ENCODE measurements at regions of chr1 and their contacts with region 1.

Region 1: DNA sequence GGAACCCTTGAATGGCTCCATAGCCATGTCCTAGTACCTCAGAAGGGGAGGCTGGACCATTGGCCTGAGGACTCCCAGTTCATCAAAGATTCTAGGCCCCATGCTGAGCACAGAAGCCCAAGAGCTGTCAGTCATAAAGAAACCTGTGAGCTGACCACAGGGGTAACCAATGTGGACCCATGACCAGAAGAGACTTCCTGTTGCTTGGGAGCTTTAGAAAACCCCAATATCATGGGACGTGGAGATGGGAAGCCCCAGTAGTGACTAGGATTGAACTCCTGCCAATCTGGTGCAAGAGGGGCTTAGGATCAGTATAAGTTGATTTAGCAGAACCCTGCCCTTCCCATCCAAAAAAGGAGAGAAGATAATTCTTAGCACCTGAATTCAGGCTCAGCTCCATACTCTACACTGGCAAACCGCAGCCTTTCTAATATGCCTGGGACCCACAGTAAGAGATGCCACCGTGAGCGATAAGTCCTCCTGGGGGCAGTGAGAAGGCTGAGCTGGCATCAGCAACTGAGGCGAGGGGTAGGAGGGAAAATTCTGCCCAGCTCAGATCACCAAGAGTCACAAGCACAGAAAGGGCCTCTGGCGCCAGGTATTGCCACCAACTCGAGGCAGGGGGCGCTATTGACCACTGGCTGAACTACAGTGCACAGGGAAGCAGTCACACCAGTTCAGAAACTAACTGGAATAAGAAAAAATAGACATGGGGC is 108.9 kb downstream of the CAPN8 start:
- DNase-seq: peak; percentile 31 to 93
- H3K4me3 ChIP-seq: no peak overlapping the region
- H3K27ac ChIP-seq: no peak overlapping the region
- H3K4me1 ChIP-seq: no peaks in the 10 kb centered on the region
- H3K27me3 ChIP-seq: no peaks in the 10 kb centered on the region
- CTCF ChIP-seq: peak; percentile 95 to 96 (median 96)
- EP300 ChIP-seq: no peak
- POLR2A ChIP-seq: no peak
- RAD21 ChIP-seq: peak; percentile 94

Region 2: DNA sequence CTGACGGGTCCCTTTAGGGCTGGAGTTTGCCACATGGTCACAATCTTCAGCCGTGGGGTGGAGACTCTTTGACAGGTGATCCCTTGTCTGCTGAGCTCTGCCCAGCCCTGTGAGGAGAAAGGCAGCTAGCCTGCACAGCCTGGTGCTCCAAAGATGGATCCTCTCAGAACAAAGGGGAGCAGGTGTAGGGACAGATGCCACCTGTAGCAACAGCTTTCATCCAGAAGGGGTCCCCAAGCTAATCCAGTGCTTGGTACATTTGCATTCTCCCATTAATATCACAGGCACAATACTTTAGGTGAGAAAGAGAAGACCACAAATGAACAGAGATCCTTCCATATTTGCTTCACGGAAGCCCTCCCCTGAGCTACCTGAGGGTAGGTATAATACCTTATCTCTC is 70.2 kb before region 1 on chr1:
- CTCF ChIA-PET with region 1: interaction called, 12 read pairs
- POLR2A ChIA-PET with region 1: no interaction called
- DNase-seq: no peak
- H3K4me3 ChIP-seq: no peak overlapping the region
- H3K27ac ChIP-seq: no peak overlapping the region
- H3K4me1 ChIP-seq: peaks cover 0 to 7% (median 1%) of the 10 kb centered on the region in 4 experiments; a peak in 3 of 7 replicates
- H3K27me3 ChIP-seq: peaks cover 0 to 2% (median 0%) of the 10 kb centered on the region in 4 experiments; a peak in 1 of 7 replicates
- CTCF ChIP-seq: peak in 1 of 3 experiments; percentile 42; a peak in 2 of 4 replicates
- EP300 ChIP-seq: no peak
- POLR2A ChIP-seq: no peak
- RAD21 ChIP-seq: no peak; a peak in 1 of 4 replicates

Region 3: DNA sequence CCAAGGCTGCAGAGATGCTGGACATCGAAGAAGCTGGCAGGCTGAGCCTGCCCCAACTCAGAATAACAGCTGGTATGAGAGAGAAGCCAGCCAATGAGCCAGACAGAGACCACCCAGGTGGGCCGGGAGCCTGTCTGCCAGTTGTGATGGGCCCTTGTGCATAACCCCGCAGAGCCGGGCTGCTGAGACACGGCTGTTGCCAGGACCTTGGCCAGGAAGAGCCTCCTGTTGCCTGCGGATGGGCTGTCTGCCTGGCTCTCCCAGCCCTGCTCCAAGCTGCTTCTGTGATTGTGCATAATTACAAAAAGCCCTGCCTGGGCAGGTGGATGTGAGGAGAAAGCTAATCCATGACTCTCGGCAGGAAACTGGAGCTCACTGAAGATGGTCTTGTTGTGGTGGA is 17.6 kb before region 1 on chr1:
- CTCF ChIA-PET with region 1: interaction called, 17 read pairs
- POLR2A ChIA-PET with region 1: no interaction called
- DNase-seq: no peak
- H3K4me3 ChIP-seq: no peak overlapping the region
- H3K27ac ChIP-seq: no peak overlapping the region
- H3K4me1 ChIP-seq: peaks cover 0 to 3% (median 0%) of the 10 kb centered on the region in 4 experiments; a peak in 1 of 7 replicates
- H3K27me3 ChIP-seq: no peaks in the 10 kb centered on the region
- CTCF ChIP-seq: no peak
- EP300 ChIP-seq: no peak
- POLR2A ChIP-seq: no peak
- RAD21 ChIP-seq: no peak

Region 4: DNA sequence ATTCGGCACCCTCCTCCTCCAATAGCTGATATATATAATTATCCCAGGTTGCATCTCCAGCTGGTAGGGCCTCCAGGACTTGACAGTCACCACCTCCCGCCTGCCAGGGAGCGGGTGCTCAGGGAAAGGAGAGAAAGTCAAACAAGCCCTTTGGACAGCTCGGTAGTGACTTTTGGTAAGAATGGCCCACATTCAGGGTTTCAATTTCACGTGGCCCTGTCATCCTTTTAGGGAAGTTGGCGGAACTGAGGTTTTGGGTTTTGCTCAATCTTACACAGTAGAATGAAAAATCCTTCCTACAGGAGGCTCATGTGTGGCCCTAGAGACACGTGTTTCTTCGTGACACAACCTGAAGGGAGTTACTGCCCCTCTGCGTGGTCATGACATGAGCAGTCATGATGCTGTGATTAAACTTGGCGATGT is 64.8 kb after region 1 on chr1:
- CTCF ChIA-PET with region 1: interaction called, 52 read pairs
- POLR2A ChIA-PET with region 1: no interaction called
- DNase-seq: no peak
- H3K4me3 ChIP-seq: no peak overlapping the region
- H3K27ac ChIP-seq: no peak overlapping the region
- H3K4me1 ChIP-seq: peaks cover 0 to 6% (median 1%) of the 10 kb centered on the region in 4 experiments; a peak in 3 of 7 replicates
- H3K27me3 ChIP-seq: no peaks in the 10 kb centered on the region
- CTCF ChIP-seq: no peak
- EP300 ChIP-seq: no peak
- POLR2A ChIP-seq: no peak
- RAD21 ChIP-seq: no peak

Region 5: GRCh38 chr1:223639331-223639749 is 82.8 kb after region 1 on chr1:
- CTCF ChIA-PET with region 1: interaction called, 19 read pairs
- POLR2A ChIA-PET with region 1: no interaction called
- DNase-seq: no peak
- H3K4me3 ChIP-seq: no peak overlapping the region
- H3K27ac ChIP-seq: no peak overlapping the region
- H3K4me1 ChIP-seq: no peaks in the 10 kb centered on the region
- H3K27me3 ChIP-seq: 0 out of 7 replicates have a peak, but pooled peaks cover 0 to 2% (median 0%) of the 10 kb centered on the region in 4 experiments
- CTCF ChIP-seq: no peak
- EP300 ChIP-seq: no peak
- POLR2A ChIP-seq: no peak
- RAD21 ChIP-seq: no peak

Region 6: GRCh38 chr1:223652436-223652941 is 95.9 kb after region 1 on chr1:
- CTCF ChIA-PET with region 1: interaction called, 10 read pairs
- POLR2A ChIA-PET with region 1: interaction called, 3 read pairs
- DNase-seq: peak in 1 of 2 experiments; percentile 50
- H3K4me3 ChIP-seq: no peak overlapping the region
- H3K27ac ChIP-seq: no peak overlapping the region
- H3K4me1 ChIP-seq: peaks cover 0 to 13% (median 7%) of the 10 kb centered on the region in 4 experiments; a peak in 6 of 7 replicates
- H3K27me3 ChIP-seq: peaks cover 0 to 2% (median 0%) of the 10 kb centered on the region in 4 experiments; a peak in 1 of 7 replicates
- CTCF ChIP-seq: no peak
- EP300 ChIP-seq: no peak
- POLR2A ChIP-seq: no peak
- RAD21 ChIP-seq: no peak

Region 7: GRCh38 chr1:223683586-223684487 is 127.3 kb after region 1 on chr1:
- CTCF ChIA-PET with region 1: interaction called, 60 read pairs
- POLR2A ChIA-PET with region 1: no interaction called
- DNase-seq: peak in 1 of 2 experiments; percentile 78
- H3K4me3 ChIP-seq: no peak overlapping the region
- H3K27ac ChIP-seq: no peak overlapping the region
- H3K4me1 ChIP-seq: no peaks in the 10 kb centered on the region
- H3K27me3 ChIP-seq: no peaks in the 10 kb centered on the region
- CTCF ChIP-seq: peak; percentile 48 to 89 (median 87)
- EP300 ChIP-seq: no peak
- POLR2A ChIP-seq: no peak
- RAD21 ChIP-seq: peak; percentile 97 to 98